Activated CD4-positive, alpha-beta memory T cell treated with anti-CD3 and anti-CD28 coated beads for 36 hours (primary cell): ENCODE measurements at regions of chr14 and their contacts with region 1.

Region 1: GRCh38 chr14:103500148-103500990 is 22.3 kb downstream of the CKB start:
- DNase-seq: peak; percentile 86
- H3K4me3 Mint-ChIP-seq: no peak overlapping the region
- H3K27ac Mint-ChIP-seq: peak overlapping the region; percentile 35
- H3K4me1 Mint-ChIP-seq: peaks cover 9% of the 10 kb centered on the region
- H3K27me3 Mint-ChIP-seq: no peaks in the 10 kb centered on the region

Region 2: DNA sequence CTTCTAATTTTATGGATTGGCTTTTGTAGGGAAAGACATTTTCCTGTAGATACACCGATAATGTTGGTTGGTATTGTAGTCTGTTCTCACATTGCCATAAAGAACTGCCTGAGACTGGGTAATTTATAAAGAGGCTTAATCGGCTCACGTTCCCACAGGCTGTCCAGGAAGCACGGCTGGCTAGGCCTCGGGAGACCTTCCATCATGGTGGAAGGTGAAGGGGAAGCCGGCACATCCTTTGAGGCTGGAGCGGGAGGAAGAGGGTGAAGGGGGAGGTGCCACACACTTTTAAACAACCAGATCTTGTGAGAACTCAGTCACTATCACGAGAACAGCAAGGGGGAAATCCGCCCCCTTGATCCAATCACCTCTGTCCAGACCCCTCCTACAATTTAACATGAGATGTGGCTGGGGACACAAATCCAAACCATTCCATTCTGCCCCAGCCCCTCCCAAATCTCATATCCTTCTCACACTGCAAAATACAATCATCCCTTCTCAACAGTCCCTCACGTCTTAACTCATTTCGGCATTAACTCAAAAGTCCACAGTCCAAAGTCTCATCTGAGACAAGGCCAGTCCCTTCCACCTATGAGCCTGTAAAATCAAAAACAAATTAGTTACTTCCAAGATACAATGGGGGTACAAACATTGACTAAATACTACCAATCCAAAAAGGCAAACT is 233.0 kb before region 1 on chr14:
- CTCF ChIA-PET with region 1: no interaction called
- POLR2A ChIA-PET with region 1: no interaction called
- intact Hi-C with region 1: no loop called
- DNase-seq: no peak
- H3K4me3 Mint-ChIP-seq: no peak overlapping the region
- H3K27ac Mint-ChIP-seq: no peak overlapping the region
- H3K4me1 Mint-ChIP-seq: no peaks in the 10 kb centered on the region
- H3K27me3 Mint-ChIP-seq: peaks cover 31% of the 10 kb centered on the region

Region 3: DNA sequence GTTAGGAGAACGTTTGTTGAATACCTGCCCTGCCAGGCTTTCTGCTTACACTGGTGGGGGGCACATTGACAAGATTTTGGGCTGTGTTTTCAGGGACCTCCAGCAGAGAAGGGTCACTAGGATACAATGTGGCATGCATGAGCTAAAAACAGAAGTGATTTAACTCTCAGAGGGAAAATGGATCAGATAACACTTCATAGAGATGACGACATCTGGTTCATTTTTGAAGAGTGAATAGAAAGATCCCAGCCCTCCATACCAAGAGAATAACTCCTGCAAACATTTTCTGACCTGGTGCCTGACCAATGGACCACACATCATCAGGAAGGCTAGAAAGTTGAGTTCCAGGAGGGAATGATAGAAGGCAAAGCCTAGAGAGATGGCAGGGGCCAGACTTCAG is 11.4 kb before region 1 on chr14:
- CTCF ChIA-PET with region 1: interaction called, 10 read pairs
- POLR2A ChIA-PET with region 1: no interaction called
- intact Hi-C with region 1: no loop called
- DNase-seq: no peak
- H3K4me3 Mint-ChIP-seq: no peak overlapping the region
- H3K27ac Mint-ChIP-seq: no peak overlapping the region
- H3K4me1 Mint-ChIP-seq: no peaks in the 10 kb centered on the region
- H3K27me3 Mint-ChIP-seq: no peaks in the 10 kb centered on the region

Region 4: DNA sequence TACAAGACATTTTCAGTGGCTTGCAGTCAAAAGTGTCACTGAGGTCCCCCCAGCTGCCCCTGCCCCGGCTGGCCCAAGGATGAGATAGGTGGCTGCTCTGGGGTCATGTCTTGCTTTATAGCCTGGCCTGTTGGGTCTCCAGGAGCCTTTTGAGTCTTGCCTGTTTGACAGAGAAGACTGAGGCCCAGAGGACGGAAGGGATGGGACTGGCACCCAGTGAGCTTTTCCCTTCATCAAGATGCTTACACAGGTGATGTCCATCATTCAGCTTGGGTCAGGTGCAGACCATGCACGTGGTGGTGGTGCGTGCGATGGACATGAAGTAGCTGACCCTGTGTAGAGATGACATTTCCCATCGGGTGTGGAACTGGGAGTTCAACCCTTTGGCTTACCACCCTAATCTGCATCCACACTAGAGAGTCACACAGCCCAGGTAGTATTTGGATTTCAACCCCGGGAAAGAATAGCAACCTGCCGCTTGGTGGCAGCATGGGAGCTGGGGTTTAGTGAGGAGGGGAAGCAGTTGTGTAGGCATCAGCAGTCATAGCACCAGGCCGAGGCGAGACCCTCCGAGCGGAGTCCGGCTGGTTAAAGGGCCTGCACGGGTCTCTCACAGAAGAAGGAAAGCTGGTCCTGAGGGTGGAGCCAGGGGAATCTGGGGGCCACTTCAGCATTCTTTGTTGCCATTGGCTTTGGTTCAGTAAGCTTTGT is 10.1 kb after region 1 on chr14:
- CTCF ChIA-PET with region 1: interaction called, 17 read pairs
- POLR2A ChIA-PET with region 1: no interaction called
- intact Hi-C with region 1: no loop called
- DNase-seq: no peak
- H3K4me3 Mint-ChIP-seq: no peak overlapping the region
- H3K27ac Mint-ChIP-seq: no peak overlapping the region
- H3K4me1 Mint-ChIP-seq: no peaks in the 10 kb centered on the region
- H3K27me3 Mint-ChIP-seq: no peaks in the 10 kb centered on the region

Region 5: GRCh38 chr14:103546652-103547454 is 46.5 kb after region 1 on chr14:
- CTCF ChIA-PET with region 1: interaction called, 13 read pairs
- POLR2A ChIA-PET with region 1: no interaction called
- intact Hi-C with region 1: loop called (anchors 1 kb)
- DNase-seq: peak; percentile 76
- H3K4me3 Mint-ChIP-seq: no peak overlapping the region
- H3K27ac Mint-ChIP-seq: no peak overlapping the region
- H3K4me1 Mint-ChIP-seq: no peaks in the 10 kb centered on the region
- H3K27me3 Mint-ChIP-seq: no peaks in the 10 kb centered on the region